CD8-positive, alpha-beta memory T cell (primary cell): ENCODE measurements at regions of chr6 and their contacts with region 1.

Region 1: DNA sequence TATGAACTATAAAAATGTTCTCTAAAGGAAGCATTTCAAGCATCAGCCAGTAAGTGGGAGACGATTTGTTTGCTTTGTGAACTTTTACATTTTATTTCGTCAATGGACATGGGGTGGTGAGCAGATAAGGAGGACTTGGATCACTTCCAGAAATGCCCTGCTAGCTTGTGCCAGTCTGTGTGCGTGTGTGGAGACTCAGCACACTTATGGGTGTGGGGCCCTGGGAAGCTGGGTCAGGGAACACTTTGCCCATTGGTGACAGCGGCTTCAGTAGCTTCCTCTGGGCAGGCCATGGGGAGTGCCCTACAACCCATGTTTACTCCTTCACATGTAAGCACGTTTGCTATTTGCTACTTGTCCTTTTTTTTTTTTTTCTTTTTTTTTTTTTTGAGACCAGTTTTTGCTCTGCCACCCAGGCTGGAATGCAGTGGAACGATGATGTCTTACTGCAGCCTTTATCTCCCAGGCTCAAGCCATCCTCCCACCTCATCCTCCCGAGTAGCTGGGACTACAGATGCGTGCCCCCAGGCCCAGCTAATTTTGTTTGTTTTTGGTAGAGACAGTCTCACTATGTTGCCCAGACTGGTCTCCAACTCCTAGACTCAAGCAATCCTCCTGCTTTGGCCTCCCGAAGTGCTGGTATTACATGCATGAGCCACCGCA is 24.2 kb downstream of the PRDM1 start:
- DNase-seq: no peak
- H3K4me3 ChIP-seq: no peak overlapping the region
- H3K4me3 Mint-ChIP-seq: peak overlapping the region in 2 of 7 donors; percentile 10 to 43
- H3K27ac ChIP-seq: no peak overlapping the region
- H3K27ac Mint-ChIP-seq: peak overlapping the region; percentile 14 to 87 (median 72)
- H3K4me1 ChIP-seq: peaks cover 53% of the 10 kb centered on the region
- H3K4me1 Mint-ChIP-seq: peaks cover 83 to 98% (median 97%) of the 10 kb centered on the region in 3 donors
- H3K27me3 ChIP-seq: no peaks in the 10 kb centered on the region
- H3K27me3 Mint-ChIP-seq: peaks cover 0 to 4% of the 10 kb centered on the region in 2 donors

Region 2: DNA sequence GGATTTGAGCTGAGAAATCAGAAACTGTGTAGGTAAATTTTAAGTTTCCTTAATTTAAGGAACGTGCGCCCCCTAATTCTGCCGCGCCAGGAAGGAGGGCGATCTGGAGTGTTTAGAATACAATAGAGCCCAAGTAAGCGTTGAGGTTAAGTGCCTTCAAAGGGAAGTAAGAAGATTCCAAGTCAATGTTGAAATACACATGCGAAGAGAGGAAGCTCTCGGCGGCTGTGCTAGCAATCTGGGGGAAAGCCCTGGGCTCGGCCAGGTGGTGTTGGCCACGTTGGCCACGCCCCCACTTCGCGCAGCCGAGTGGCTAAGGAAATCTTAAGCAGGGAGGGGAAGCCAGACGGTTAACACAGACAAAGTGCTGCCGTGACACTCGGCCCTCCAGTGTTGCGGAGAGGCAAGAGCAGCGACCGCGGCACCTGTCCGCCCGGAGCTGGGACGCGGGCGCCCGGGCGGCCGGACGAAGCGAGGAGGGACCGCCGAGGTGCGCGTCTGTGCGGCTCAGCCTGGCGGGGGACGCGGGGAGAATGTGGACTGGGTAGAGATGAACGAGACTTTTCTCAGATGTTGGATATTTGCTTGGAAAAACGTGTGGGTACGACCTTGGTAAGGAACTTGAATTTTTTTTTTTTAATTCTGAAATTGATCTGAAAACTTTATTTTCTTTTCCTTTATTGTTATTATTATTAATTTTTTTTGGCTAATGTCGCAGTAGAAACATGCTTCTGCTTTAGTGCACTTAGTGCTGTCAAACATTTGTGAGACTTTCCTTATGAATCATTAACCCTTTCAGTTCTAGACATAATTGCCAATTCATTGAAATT is 24.1 kb before region 1 on chr6 and contains the start of gene PRDM1:
- CTCF ChIA-PET with region 1: interaction called, 4 read pairs
- POLR2A ChIA-PET with region 1: interaction called, 16 read pairs
- DNase-seq: peak; percentile 52 to 88 (median 81)
- H3K4me3 ChIP-seq: peak within 1 kb of the TSS; percentile 61
- H3K4me3 Mint-ChIP-seq: peak within 1 kb of the TSS; percentile 90 to 97 (median 93)
- H3K27ac ChIP-seq: peak within 1 kb of the TSS; percentile 52
- H3K27ac Mint-ChIP-seq: peak within 1 kb of the TSS; percentile 61 to 97 (median 92)
- H3K4me1 ChIP-seq: peaks cover 66% of the 10 kb centered on the region
- H3K4me1 Mint-ChIP-seq: peaks cover 80 to 94% (median 93%) of the 10 kb centered on the region in 3 donors
- H3K27me3 ChIP-seq: no peaks in the 10 kb centered on the region
- H3K27me3 Mint-ChIP-seq: peaks cover 0 to 4% of the 10 kb centered on the region in 2 donors
- total RNA-seq, gene PRDM1: 88.2 to 90.7 TPM

Region 3: DNA sequence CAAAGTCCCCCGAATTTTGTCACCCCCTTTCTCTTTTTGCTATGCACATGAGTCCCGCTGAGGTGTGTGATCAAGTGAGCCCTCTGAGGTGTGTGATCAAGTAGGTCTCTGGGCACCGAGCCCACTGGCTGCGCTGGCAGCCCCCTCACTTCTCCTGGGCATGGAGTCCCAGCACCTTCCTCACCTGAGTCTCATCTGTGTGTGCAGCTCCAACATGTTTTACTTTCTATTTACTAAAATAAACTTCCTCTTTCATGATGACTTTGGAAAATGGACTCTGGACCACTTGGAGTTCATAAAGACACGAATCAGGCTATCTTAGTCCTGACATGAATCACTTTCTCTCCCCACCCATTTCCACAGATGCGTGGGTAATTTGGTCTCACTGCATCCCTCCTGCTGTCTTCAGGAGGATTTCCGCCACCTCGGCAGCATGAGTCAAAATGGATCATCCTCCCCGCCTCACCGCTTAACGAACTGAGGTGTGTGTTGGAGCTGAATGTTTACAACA is 15.7 kb after region 1 on chr6:
- CTCF ChIA-PET with region 1: no interaction called
- POLR2A ChIA-PET with region 1: no interaction called
- DNase-seq: peak in 2 of 5 donors; percentile 16 to 64
- H3K4me3 ChIP-seq: peak overlapping the region; percentile 13
- H3K4me3 Mint-ChIP-seq: peak overlapping the region; percentile 48 to 86 (median 82)
- H3K27ac ChIP-seq: peak overlapping the region; percentile 32
- H3K27ac Mint-ChIP-seq: peak overlapping the region; percentile 27 to 91 (median 83)
- H3K4me1 ChIP-seq: peaks cover 10% of the 10 kb centered on the region
- H3K4me1 Mint-ChIP-seq: peaks cover 12 to 39% (median 26%) of the 10 kb centered on the region in 3 donors
- H3K27me3 ChIP-seq: no peaks in the 10 kb centered on the region
- H3K27me3 Mint-ChIP-seq: peaks cover 0 to 1% of the 10 kb centered on the region in 2 donors